Left ventricle myocardium inferior (tissue), 1 donor: ENCODE measurements at regions of chr18 and their contacts with region 1.

Region 1: GRCh38 chr18:21997207-21998143 is 171.9 kb upstream of the GATA6 start:
- DNase-seq: no peak
- H3K4me3 ChIP-seq: no peak overlapping the region
- H3K27ac ChIP-seq: peak overlapping the region; percentile 79
- H3K4me1 ChIP-seq: peaks cover 30% of the 10 kb centered on the region
- H3K27me3 ChIP-seq: no peaks in the 10 kb centered on the region
- CTCF ChIP-seq: peak; percentile 92

Region 2: GRCh38 chr18:22098563-22098989 is 101.1 kb after region 1 on chr18:
- intact Hi-C with region 1: no loop called
- DNase-seq: no peak
- H3K4me3 ChIP-seq: no peak overlapping the region
- H3K27ac ChIP-seq: no peak overlapping the region
- H3K4me1 ChIP-seq: peaks cover 16% of the 10 kb centered on the region
- H3K27me3 ChIP-seq: peaks cover 20% of the 10 kb centered on the region
- CTCF ChIP-seq: no peak

Region 3: DNA sequence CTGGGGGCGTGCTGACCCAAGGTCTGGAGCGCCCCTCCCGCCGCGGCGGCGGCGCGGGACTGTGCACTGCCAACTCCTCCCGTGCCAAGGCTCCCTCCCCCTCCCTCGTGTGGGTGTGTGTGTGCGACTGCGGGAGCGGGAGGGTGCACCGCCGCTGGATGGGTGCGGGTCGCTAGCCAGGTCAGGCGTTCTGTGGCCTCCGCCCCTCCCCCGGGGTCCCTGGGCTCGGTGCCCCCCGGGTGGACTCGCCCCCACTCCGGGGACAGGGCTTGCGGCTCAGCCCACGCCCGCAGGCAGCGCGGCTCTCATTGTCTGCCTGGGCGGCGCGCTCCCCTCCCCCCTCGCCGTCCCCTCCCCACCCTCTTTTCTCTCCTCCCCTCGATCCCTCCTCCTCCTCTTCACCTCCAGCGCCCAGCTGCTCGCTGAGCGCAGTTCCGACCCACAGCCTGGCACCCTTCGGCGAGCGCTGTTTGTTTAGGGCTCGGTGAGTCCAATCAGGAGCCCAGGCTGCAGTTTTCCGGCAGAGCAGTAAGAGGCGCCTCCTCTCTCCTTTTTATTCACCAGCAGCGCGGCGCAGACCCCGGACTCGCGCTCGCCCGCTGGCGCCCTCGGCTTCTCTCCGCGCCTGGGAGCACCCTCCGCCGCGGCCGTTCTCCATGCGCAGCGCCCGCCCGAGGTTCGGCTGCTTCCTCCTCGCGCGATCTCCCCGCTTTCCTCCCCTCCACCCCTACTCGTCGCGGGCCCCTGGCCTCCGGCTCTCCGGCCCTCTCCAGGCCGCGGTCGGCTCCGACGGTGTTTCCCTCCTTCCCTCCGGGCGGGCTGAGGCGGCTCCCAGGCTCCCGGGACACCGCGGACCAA is 171.8 kb after region 1 on chr18 and contains the start of gene GATA6:
- intact Hi-C with region 1: loop called (anchors 10 kb)
- DNase-seq: peak; percentile 92
- H3K4me3 ChIP-seq: peak within 1 kb of the TSS; percentile 99
- H3K27ac ChIP-seq: peak within 1 kb of the TSS; percentile 100
- H3K4me1 ChIP-seq: peaks cover 88% of the 10 kb centered on the region
- H3K27me3 ChIP-seq: peaks cover 42% of the 10 kb centered on the region
- CTCF ChIP-seq: peak; percentile 38
- total RNA-seq, gene GATA6: 60.9 TPM